ENCODE measurements at regions of chr5 and their contacts with region 1.

Region 1: GRCh38 chr5:170267431-170268152 is 30.0 kb downstream of the LCP2 start:
- DNase-seq: peak in 1 of 2 experiments; percentile 83
- H3K4me3 ChIP-seq: no peak overlapping the region
- H3K27ac ChIP-seq: no peak overlapping the region
- H3K4me1 ChIP-seq: peaks cover 6 to 11% (median 8%) of the 10 kb centered on the region in 4 experiments; a peak in 4 of 7 replicates
- H3K27me3 ChIP-seq: no peaks in the 10 kb centered on the region; a peak in 1 of 7 replicates
- CTCF ChIP-seq: peak; percentile 85 to 93 (median 89)
- EP300 ChIP-seq: no peak
- POLR2A ChIP-seq: no peak
- RAD21 ChIP-seq: peak; percentile 74 to 80

Region 2: GRCh38 chr5:170151097-170151831 is 116.3 kb before region 1 on chr5:
- CTCF ChIA-PET with region 1: no interaction called
- POLR2A ChIA-PET with region 1: no interaction called
- DNase-seq: peak; percentile 53 to 56
- H3K4me3 ChIP-seq: no peak overlapping the region
- H3K27ac ChIP-seq: no peak overlapping the region
- H3K4me1 ChIP-seq: peaks cover 0 to 12% (median 3%) of the 10 kb centered on the region in 4 experiments; a peak in 5 of 7 replicates
- H3K27me3 ChIP-seq: no peaks in the 10 kb centered on the region
- CTCF ChIP-seq: no peak
- EP300 ChIP-seq: peak in 1 of 2 experiments; percentile 72; a peak in 1 of 3 replicates
- POLR2A ChIP-seq: no peak
- RAD21 ChIP-seq: no peak

Region 3: DNA sequence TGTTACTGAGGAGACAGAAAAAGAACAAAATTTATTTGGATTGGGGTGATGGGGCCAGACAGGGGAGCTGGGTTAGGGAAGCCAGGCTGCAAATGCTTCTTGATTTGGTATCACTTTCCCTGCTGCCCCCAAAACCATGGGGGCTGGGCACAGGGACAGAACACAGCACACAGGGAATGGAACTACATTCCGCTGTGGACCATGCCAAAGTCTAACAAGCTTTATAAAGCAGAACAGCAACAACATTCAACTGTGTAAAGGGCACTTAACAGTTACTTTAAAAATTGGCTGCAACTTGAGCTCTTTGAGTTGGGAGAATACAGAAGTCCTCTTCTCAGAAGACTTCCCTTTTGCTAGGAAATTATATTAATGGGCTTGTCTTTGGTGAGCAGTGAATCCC is 11.0 kb before region 1 on chr5:
- CTCF ChIA-PET with region 1: interaction called, 34 read pairs
- POLR2A ChIA-PET with region 1: no interaction called
- DNase-seq: no peak
- H3K4me3 ChIP-seq: no peak overlapping the region
- H3K27ac ChIP-seq: no peak overlapping the region
- H3K4me1 ChIP-seq: peaks cover 0 to 16% (median 13%) of the 10 kb centered on the region in 4 experiments; a peak in 6 of 7 replicates
- H3K27me3 ChIP-seq: no peaks in the 10 kb centered on the region
- CTCF ChIP-seq: no peak
- EP300 ChIP-seq: no peak
- POLR2A ChIP-seq: no peak
- RAD21 ChIP-seq: no peak

Region 4: GRCh38 chr5:170302653-170303501 is 35.3 kb after region 1 on chr5:
- CTCF ChIA-PET with region 1: interaction called, 16 read pairs
- POLR2A ChIA-PET with region 1: interaction called, 3 read pairs
- DNase-seq: no peak
- H3K4me3 ChIP-seq: no peak overlapping the region
- H3K27ac ChIP-seq: no peak overlapping the region
- H3K4me1 ChIP-seq: peaks cover 0 to 5% (median 2%) of the 10 kb centered on the region in 4 experiments; a peak in 2 of 7 replicates
- H3K27me3 ChIP-seq: no peaks in the 10 kb centered on the region; a peak in 1 of 7 replicates
- CTCF ChIP-seq: peak; percentile 7 to 32 (median 27); a peak in 3 of 4 replicates
- EP300 ChIP-seq: no peak
- POLR2A ChIP-seq: no peak
- RAD21 ChIP-seq: peak in 1 of 2 experiments; percentile 19; a peak in 1 of 4 replicates

Region 5: GRCh38 chr5:170333161-170333910 is 65.7 kb after region 1 on chr5:
- CTCF ChIA-PET with region 1: interaction called, 77 read pairs
- POLR2A ChIA-PET with region 1: interaction called, 3 read pairs
- DNase-seq: peak in 1 of 2 experiments; percentile 67
- H3K4me3 ChIP-seq: peak overlapping the region in 1 of 4 experiments; percentile 15; a peak in 2 of 8 replicates
- H3K27ac ChIP-seq: no peak overlapping the region
- H3K4me1 ChIP-seq: peaks cover 7 to 31% (median 23%) of the 10 kb centered on the region in 4 experiments
- H3K27me3 ChIP-seq: no peaks in the 10 kb centered on the region
- CTCF ChIP-seq: no peak
- EP300 ChIP-seq: no peak
- POLR2A ChIP-seq: no peak
- RAD21 ChIP-seq: no peak; a peak in 1 of 4 replicates

Region 6: GRCh38 chr5:170357955-170358444 is 90.4 kb after region 1 on chr5:
- CTCF ChIA-PET with region 1: interaction called, 10 read pairs
- POLR2A ChIA-PET with region 1: no interaction called
- DNase-seq: no peak
- H3K4me3 ChIP-seq: no peak overlapping the region
- H3K27ac ChIP-seq: no peak overlapping the region
- H3K4me1 ChIP-seq: peaks cover 5 to 20% (median 13%) of the 10 kb centered on the region in 4 experiments
- H3K27me3 ChIP-seq: peaks cover 0 to 4% (median 1%) of the 10 kb centered on the region in 4 experiments; a peak in 3 of 7 replicates
- CTCF ChIP-seq: no peak
- EP300 ChIP-seq: no peak
- POLR2A ChIP-seq: no peak
- RAD21 ChIP-seq: no peak

Region 7: DNA sequence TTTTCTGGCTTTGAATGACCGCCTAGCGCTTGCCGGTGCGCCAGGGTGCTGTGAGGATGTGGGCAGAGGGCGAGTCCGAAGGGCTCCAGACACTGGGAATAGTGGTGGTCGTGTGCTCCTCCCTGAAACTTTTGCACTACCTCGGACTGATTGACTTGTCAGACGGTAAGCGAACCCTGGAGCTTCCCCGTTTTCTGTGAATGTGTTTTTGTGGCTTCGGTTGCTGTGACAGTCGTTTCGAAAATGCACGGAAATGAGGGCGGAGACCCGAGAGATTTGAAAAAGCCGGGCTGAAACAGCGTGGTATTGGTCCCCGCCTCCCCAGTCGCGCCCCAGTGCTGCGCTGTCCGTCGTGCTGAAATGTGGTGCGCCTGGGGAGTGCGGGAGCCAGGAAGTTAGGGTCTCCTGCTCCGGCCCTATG is 413.4 kb after region 1 on chr5:
- CTCF ChIA-PET with region 1: no interaction called
- POLR2A ChIA-PET with region 1: no interaction called
- DNase-seq: peak in 1 of 2 experiments; percentile 88
- H3K4me3 ChIP-seq: peak overlapping the region; percentile 36 to 59 (median 57); a peak in 7 of 8 replicates
- H3K27ac ChIP-seq: no peak overlapping the region
- H3K4me1 ChIP-seq: peaks cover 0 to 7% (median 2%) of the 10 kb centered on the region in 4 experiments; a peak in 2 of 7 replicates
- H3K27me3 ChIP-seq: peaks cover 6 to 15% (median 11%) of the 10 kb centered on the region in 4 experiments
- CTCF ChIP-seq: no peak
- EP300 ChIP-seq: no peak
- POLR2A ChIP-seq: no peak
- RAD21 ChIP-seq: peak in 1 of 2 experiments; percentile 14; a peak in 1 of 4 replicates

Measured in H1 (cell line).